Right ventricle myocardium inferior (tissue), 1 donor: ENCODE measurements at regions of chr1 and their contacts with region 1.

Region 1: DNA sequence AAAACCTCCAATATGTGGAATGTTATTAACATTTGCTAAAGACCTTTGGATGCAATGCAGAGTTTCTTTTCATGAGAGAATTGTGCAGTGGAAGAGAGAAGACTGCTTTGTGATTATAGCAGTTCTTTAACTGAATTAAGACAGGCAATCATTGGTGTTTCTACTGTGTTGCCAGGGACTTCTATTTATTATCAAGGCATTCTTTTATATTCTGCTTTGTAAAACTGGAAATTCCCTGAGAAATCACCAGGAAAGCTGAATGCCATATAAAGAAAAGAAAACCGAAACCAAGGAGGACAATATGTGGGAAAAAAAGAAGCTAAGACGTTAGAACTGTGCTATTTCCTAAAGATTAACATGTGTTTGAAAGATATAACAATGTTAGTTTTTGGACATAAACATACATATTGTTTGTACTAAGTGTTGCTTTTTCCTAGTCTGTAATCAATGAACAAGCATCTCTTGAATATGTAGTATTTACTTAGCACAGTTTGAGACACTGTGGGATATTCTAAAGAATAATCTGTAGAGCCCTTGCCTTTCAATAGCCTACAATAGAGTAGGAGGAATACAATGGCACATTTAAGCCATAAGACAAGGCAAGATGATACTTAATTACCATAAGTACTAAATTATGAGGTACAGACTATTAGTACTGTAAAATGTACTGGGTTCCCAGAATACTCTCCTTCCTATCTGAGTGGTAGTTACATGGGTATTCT is 47.1 kb downstream of the EXTL2 start:
- DNase-seq: no peak
- ATAC-seq: no peak

Region 2: DNA sequence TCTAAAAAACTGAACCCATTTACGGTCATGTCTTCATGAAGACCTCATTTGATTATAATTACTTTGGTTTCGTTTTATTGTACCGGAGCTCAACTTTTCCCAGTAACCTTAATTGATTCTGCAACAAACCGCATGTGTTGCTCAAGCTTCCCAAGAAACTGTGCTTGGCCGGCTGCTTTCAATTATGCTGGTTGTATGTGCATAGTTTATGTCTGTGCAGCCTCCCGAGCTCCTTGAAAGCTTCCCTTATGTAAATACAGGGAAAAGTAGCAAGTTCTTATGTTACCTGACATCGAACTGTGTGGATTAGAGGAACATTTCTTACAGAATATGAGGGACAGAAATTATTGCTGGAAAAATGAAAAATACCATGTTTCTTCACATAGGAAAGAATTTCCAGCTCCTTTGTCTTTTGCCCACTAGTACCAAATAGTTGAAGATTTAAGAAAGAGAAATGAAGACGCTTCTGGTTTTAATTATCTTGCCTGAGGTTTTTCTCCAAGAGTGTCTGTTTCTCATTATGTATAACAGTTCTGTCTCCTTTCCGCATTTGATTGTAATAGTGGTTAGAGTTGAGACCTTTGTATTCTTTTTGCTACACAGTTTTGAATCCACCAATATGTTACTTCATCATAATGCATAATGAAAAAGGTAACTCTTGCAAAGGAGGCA is 125.8 kb before region 1 on chr1:
- intact Hi-C with region 1: loop called (anchors 10 kb)
- DNase-seq: no peak
- ATAC-seq: peak; percentile 71